Activated B cell treated with CpG ODN at 0.5 μM for 24 hours (primary cell): ENCODE measurements at regions of chr17 and their contacts with region 1.

Region 1: GRCh38 chr17:50151041-50151936 is 812 bp upstream of the PPP1R9B start:
- DNase-seq: peak; percentile 80
- ATAC-seq: peak; percentile 40
- H3K4me3 Mint-ChIP-seq: peak overlapping the region; percentile 93
- H3K27ac Mint-ChIP-seq: peak overlapping the region; percentile 91
- H3K4me1 Mint-ChIP-seq: peaks cover 34% of the 10 kb centered on the region
- H3K27me3 Mint-ChIP-seq: no peaks in the 10 kb centered on the region
- CTCF ChIP-seq: no peak

Region 2: GRCh38 chr17:50139950-50140871 is 11.1 kb before region 1 on chr17:
- CTCF ChIA-PET with region 1: interaction called, 5 read pairs
- POLR2A ChIA-PET with region 1: interaction called, 40 read pairs
- intact Hi-C with region 1: loop called (anchors 1 kb)
- DNase-seq: peak; percentile 76
- ATAC-seq: peak; percentile 85
- H3K4me3 Mint-ChIP-seq: peak overlapping the region; percentile 41
- H3K27ac Mint-ChIP-seq: peak overlapping the region; percentile 70
- H3K4me1 Mint-ChIP-seq: peaks cover 63% of the 10 kb centered on the region
- H3K27me3 Mint-ChIP-seq: no peaks in the 10 kb centered on the region
- CTCF ChIP-seq: peak; percentile 43

Region 3: DNA sequence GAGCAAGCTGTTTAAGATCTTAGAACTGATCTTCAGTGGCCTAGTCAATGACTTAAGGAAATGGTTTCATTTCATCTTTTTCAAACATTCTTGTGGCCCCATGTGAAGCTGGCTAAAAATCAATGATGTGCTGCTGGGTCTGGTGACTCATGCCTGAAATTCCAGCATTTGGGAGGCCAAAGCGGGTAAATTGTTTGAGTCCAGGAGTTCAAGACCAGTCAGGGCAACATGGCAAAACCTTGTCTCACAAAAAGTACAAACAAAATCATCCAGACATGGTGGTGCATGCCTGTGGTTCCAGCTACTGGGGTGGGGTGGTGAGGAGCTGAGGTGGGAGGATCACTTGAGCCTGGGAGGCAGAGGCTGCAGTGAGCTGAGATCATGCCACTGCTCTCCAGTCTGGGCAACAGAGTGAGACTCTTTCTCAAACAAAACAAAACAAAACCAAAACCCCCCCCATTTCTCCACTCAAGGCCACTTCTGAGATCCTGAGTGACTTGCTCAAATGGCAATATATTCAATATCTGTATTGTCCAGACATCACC is 67.6 kb after region 1 on chr17:
- CTCF ChIA-PET with region 1: no interaction called
- POLR2A ChIA-PET with region 1: no interaction called
- intact Hi-C with region 1: no loop called
- DNase-seq: no peak
- ATAC-seq: no peak
- H3K4me3 Mint-ChIP-seq: no peak overlapping the region
- H3K27ac Mint-ChIP-seq: no peak overlapping the region
- H3K4me1 Mint-ChIP-seq: no peaks in the 10 kb centered on the region
- H3K27me3 Mint-ChIP-seq: peaks cover 2% of the 10 kb centered on the region
- CTCF ChIP-seq: no peak